Breast epithelium (tissue), 4 donors: ENCODE measurements at regions of chr7 and their contacts with region 1.

Region 1: DNA sequence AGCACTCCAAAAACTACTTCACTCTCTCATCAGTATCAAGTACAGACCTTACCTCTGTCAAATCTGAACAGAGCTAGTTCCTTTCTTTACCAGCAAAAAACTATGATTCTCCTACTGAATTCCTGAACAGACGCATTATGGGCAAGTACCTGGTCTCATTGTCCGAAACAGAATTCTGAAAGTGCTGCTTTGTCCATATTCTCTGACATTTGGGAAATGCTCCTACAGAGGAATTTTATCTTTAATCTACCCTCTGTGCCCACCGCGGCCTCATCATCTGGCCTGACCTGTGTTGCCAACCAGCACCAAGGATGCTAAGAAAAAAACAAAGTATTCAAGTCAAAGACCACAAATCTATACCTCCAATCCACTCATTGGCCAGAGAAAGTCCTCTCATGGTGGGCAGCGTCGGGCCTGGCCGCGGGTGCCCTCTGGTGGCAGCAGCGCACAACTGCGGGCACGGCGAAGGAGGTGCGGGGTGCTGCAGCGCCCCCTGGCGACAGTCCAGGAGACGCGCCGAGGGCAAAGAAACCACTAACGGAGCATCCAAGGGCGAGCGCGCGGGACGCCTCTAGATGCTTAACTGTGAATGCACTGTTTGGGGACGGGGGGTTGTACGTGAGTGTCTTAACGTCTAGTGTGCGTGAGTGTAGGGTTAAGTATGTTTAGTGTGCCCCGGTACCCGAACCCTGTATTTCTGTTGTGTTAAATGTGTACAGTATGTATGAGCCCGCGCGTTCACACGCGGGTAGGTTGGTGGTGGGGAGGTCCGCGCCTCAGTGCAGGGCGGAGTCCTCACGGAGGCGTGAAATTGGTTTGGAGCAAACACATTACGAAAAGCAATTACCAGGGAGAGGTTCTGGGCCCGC is 5.0 kb upstream of the GBX1 start:
- DNase-seq: peak; percentile 55 to 84
- H3K4me3 ChIP-seq: no peak overlapping the region
- H3K27ac ChIP-seq: no peak overlapping the region
- H3K4me1 ChIP-seq: peaks cover 0 to 2% of the 10 kb centered on the region in 2 donors
- H3K27me3 ChIP-seq: peaks cover 2 to 51% of the 10 kb centered on the region in 2 donors
- CTCF ChIP-seq: peak; percentile 97 to 100 (median 100)
- POLR2A ChIP-seq: no peak

Region 2: DNA sequence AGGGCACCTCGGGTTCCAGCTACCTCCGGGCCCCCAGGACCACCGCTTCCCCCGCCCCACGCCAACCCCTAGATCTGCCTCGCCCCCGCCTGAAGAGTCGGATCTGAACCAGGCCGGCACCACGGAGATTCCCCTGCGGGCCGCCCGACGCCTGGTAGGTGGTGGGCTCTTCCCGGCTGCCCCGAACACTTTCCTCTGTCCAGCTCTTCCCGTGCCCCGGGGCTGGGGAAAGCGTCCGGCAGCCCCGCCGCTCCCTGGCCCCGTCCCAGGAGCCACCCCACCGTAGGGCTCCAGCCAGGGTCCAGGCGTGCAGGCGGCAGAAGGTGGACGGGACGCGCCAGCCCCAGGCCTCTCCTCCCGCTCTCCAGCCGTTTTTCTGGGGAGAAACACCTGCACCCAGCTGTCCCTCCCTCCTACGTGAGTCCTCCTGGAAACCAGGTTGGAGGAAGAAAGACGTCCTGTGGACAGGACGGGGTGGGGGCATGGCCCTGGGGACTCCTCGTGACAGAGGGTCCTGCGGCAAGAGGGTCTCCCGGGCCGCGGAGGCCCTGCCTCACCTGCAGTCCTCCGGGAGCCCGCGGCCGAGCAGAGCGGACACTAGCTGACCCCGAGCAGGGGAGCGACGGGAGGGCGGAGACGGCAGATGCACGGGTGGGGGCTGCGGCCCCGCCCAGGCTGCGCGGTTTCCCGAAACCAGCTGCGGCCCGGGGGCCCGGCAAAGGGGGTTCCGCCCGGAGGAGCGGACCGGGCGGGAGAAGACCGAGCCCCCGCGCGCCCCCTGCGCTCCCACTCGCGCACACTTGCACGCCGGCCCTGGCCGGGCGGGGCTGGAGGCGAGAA is 372.5 kb before region 1 on chr7 and contains the start of gene TMEM176B:
- intact Hi-C with region 1: loop called (anchors 10 kb)
- DNase-seq: no peak
- H3K4me3 ChIP-seq: peak within 1 kb of the TSS; percentile 61 to 83 (median 65)
- H3K27ac ChIP-seq: peak within 1 kb of the TSS; percentile 64 to 87
- H3K4me1 ChIP-seq: no peaks in the 10 kb centered on the region
- H3K27me3 ChIP-seq: peaks cover 2 to 21% of the 10 kb centered on the region in 2 donors
- CTCF ChIP-seq: no peak
- POLR2A ChIP-seq: no peak
- total RNA-seq, gene TMEM176B: 49.1 to 105 (median 75.5) TPM